ENCODE measurements at regions of chr17 and their contacts with region 1.

Region 1: GRCh38 chr17:57671667-57672632 is 73.1 kb downstream of the CCDC182 start:
- DNase-seq: no peak
- ATAC-seq: peak; percentile 100
- H3K4me3 ChIP-seq: no peak overlapping the region
- H3K27ac ChIP-seq: no peak overlapping the region
- H3K4me1 ChIP-seq: peaks cover 4% of the 10 kb centered on the region; the same call in 1 of the 2 replicates
- H3K27me3 ChIP-seq: no peaks in the 10 kb centered on the region
- CTCF ChIP-seq: peak; percentile 90 to 95 (median 93)
- EP300 ChIP-seq: no peak
- POLR2A ChIP-seq: no peak
- RAD21 ChIP-seq: peak; percentile 82

Region 2: DNA sequence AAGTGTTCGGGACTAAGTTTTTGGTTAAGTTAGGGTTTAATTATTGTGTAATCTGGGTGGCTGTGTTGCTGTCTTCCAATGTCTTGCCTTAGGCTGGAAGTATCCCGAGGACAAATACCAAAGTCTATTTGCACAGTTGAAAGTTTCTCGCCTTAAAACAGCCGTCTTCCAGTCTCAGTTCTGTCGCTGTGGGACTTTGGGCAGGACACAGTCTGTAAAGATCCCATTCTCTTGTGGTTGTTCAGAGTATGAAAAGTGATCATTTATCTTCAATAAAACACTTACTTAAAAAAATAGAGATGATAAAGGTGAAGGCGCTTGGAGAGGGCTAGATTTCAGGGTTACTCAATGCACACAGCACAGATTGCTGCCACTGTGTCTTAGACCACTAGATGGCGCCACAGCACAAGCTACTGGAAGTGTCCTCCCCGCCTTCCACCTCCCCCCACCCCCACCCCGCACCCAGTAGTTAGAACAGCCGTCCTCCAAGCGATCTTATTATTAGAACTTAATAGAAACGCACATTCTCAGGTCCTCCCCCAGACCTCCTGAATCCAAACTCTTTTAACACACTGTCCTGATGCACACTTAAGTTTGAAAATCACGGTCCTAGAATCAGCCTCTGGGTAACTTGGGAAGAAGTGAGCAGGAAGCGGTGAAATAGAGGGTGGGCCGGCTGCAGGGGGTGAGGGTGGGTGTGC is 541.0 kb before region 1 on chr17:
- CTCF ChIA-PET with region 1: interaction called, 8 read pairs
- POLR2A ChIA-PET with region 1: no interaction called
- RAD21 ChIA-PET with region 1: interaction called, 9 read pairs
- SMC1A ChIA-PET with region 1: no interaction called
- in situ Hi-C with region 1: no loop called
- intact Hi-C with region 1: loop called (anchors 10 kb)
- DNase-seq: peak; percentile 25
- ATAC-seq: peak; percentile 99
- H3K4me3 ChIP-seq: no peak overlapping the region
- H3K27ac ChIP-seq: no peak overlapping the region
- H3K4me1 ChIP-seq: peaks cover 5% of the 10 kb centered on the region
- H3K27me3 ChIP-seq: no peaks in the 10 kb centered on the region
- CTCF ChIP-seq: peak; percentile 59 to 84 (median 80)
- EP300 ChIP-seq: no peak
- POLR2A ChIP-seq: no peak
- RAD21 ChIP-seq: peak; percentile 79

Region 3: GRCh38 chr17:57455063-57455914 is 216.7 kb before region 1 on chr17:
- CTCF ChIA-PET with region 1: interaction called, 6 read pairs
- POLR2A ChIA-PET with region 1: no interaction called
- RAD21 ChIA-PET with region 1: interaction called, 7 read pairs
- SMC1A ChIA-PET with region 1: interaction called, 6 read pairs
- in situ Hi-C with region 1: no loop called
- intact Hi-C with region 1: loop called (anchors 10 kb)
- DNase-seq: peak; percentile 94
- ATAC-seq: peak; percentile 91
- H3K4me3 ChIP-seq: no peak overlapping the region
- H3K27ac ChIP-seq: peak overlapping the region; percentile 98
- H3K4me1 ChIP-seq: peaks cover 73% of the 10 kb centered on the region
- H3K27me3 ChIP-seq: no peaks in the 10 kb centered on the region
- CTCF ChIP-seq: no peak
- EP300 ChIP-seq: peak; percentile 95 to 99
- POLR2A ChIP-seq: peak; percentile 59
- RAD21 ChIP-seq: peak; percentile 35

Region 4: DNA sequence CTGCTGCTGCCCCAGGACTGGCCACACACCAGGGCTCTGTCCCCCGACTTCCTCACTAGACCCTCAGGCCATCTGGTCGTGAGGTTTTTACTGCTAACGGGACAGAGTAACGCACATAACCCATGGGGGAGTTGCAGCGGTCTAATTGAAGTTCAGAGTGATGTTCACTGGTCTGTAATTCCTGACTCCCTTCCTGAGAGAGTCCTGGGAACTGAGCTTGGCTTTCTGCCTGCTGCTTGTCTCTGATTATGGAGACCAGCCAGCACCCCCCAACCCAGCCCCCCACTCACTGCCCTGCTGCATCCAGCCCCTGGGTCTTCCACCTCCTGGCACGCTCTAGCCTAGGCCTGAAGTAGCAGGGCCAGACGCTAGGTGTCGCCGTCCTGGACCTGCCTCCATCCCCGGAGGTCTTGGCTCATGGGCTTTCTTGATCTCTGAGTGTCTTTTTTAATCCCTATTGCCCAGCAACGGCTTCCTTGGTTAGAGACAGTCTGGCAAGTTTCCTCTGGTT is 119.8 kb before region 1 on chr17:
- CTCF ChIA-PET with region 1: interaction called, 19 read pairs
- POLR2A ChIA-PET with region 1: no interaction called
- RAD21 ChIA-PET with region 1: interaction called, 5 read pairs
- SMC1A ChIA-PET with region 1: interaction called, 4 read pairs
- in situ Hi-C with region 1: no loop called
- intact Hi-C with region 1: no loop called
- DNase-seq: no peak
- ATAC-seq: peak; percentile 91
- H3K4me3 ChIP-seq: no peak overlapping the region
- H3K27ac ChIP-seq: peak overlapping the region; percentile 89
- H3K4me1 ChIP-seq: peaks cover 34% of the 10 kb centered on the region
- H3K27me3 ChIP-seq: no peaks in the 10 kb centered on the region
- CTCF ChIP-seq: peak; percentile 59 to 84 (median 77)
- EP300 ChIP-seq: no peak
- POLR2A ChIP-seq: peak; percentile 35; the same call in 1 of the 2 replicates
- RAD21 ChIP-seq: peak; percentile 64

Region 5: GRCh38 chr17:57604771-57605674 is 66.9 kb before region 1 on chr17:
- CTCF ChIA-PET with region 1: interaction called, 58 read pairs
- POLR2A ChIA-PET with region 1: no interaction called
- RAD21 ChIA-PET with region 1: interaction called, 18 read pairs
- SMC1A ChIA-PET with region 1: interaction called, 8 read pairs
- in situ Hi-C with region 1: no loop called
- intact Hi-C with region 1: no loop called
- DNase-seq: no peak
- ATAC-seq: peak; percentile 80
- H3K4me3 ChIP-seq: no peak overlapping the region
- H3K27ac ChIP-seq: peak overlapping the region; percentile 67
- H3K4me1 ChIP-seq: peaks cover 42% of the 10 kb centered on the region
- H3K27me3 ChIP-seq: no peaks in the 10 kb centered on the region
- CTCF ChIP-seq: peak in 2 of 3 experiments; percentile 5 to 8; a peak in 1 of 6 replicates
- EP300 ChIP-seq: 0 out of 4 replicates have a peak, but pooled peaks of 1 of the 2 experiments have one; percentile 26
- POLR2A ChIP-seq: no peak; the same call in 1 of the 2 replicates
- RAD21 ChIP-seq: peak; percentile 33; the same call in 1 of the 2 replicates

Region 6: DNA sequence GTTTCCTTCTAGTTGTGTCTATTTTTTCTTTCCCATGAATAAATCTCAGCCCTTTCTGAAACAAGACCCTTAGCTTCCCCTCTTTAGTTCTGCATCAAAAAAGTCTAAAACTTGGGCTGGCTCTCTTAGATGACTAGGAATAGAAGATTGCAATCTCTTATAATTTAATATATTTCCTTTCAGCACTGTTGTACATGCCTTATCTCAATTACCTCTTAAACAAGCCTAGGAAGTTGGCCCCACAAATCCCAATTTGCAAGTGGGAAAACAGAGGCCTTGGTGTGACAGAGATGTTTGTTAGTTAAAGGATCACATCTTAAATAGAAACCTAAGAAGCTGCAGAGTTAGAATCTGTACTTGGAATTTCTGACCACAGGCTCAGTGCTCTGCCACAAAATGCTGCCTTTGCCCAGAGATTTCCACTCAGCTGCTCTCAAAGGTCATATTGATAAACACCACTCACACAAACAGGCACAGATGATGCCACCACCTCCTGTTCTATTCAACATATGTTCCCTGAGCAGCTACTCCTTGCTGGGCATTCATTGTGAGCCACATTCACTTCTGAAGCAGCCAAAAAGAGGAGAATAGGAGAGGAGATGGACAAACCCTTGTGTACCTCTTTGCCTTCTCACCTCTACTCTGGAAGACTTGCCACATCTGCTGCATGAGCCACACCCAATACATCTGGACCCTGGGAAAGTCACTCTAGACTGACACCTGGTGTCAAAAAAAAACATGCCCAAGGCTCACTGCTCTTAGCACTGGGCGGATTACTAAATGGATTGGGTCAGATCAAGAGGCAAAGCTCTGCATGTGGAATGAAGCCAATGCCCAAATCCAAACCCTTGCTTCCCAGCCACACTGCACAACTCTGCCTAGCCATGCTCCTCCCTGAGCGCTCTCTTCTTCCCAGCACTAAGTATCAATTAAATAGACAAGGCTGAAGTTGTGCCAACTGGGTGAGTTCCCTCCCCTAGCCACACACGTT is 67.7 kb after region 1 on chr17:
- CTCF ChIA-PET with region 1: interaction called, 32 read pairs
- POLR2A ChIA-PET with region 1: no interaction called
- RAD21 ChIA-PET with region 1: interaction called, 5 read pairs
- SMC1A ChIA-PET with region 1: interaction called, 5 read pairs
- in situ Hi-C with region 1: no loop called
- intact Hi-C with region 1: no loop called
- DNase-seq: no peak
- ATAC-seq: peak; percentile 87
- H3K4me3 ChIP-seq: no peak overlapping the region
- H3K27ac ChIP-seq: no peak overlapping the region
- H3K4me1 ChIP-seq: peaks cover 20% of the 10 kb centered on the region
- H3K27me3 ChIP-seq: no peaks in the 10 kb centered on the region
- CTCF ChIP-seq: peak; percentile 48 to 63 (median 60); a peak in 5 of 6 replicates
- EP300 ChIP-seq: no peak
- POLR2A ChIP-seq: no peak
- RAD21 ChIP-seq: peak; percentile 71